CD8-positive, alpha-beta T cell (primary cell): ENCODE measurements at regions of chr17 and their contacts with region 1.

Region 1: DNA sequence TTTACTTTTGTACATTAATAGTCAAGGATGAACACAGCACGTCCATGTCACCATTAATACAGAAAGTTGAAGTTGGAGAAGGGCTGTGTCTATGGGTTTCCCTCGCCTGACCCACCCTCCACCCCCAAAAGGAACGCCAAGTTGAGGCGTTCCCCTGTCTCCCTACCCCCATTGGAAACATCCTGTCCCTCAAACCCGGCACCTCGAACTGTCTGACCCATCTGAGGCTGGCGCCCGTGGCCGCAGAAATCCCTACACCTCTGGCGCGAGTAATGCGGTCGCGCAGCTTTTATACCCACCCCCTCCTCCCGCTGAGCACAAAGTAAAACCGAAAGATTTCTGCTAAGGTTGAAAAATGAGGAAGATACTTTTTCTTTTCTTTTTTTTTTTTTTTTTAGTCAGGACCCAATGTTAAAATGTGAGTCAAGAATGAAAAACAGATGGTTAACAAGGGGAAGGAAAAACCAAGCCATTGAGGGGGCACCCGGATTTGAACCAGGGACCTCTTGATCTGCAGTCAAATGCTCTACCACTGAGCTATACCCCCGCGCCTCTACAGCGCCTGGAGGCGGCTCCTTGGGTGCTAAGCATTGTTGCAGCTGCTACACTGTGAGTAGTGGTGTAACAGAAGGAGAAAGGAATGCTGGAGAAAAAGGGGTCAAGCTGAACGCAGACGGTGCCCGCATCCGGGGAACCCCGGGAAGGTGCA is 887 bp upstream of the LASP1 start:
- DNase-seq: peak; percentile 77 to 92 (median 88)
- ATAC-seq: peak; percentile 51
- H3K4me3 ChIP-seq: peak overlapping the region; percentile 99 to 100
- H3K4me3 Mint-ChIP-seq: peak overlapping the region; percentile 99
- H3K27ac ChIP-seq: peak overlapping the region; percentile 79 to 84
- H3K27ac Mint-ChIP-seq: peak overlapping the region; percentile 97
- H3K4me1 ChIP-seq: peaks cover 40% of the 10 kb centered on the region
- H3K4me1 Mint-ChIP-seq: peaks cover 52% of the 10 kb centered on the region
- H3K27me3 ChIP-seq: no peaks in the 10 kb centered on the region
- H3K27me3 Mint-ChIP-seq: no peaks in the 10 kb centered on the region
- CTCF ChIP-seq: no peak

Region 2: GRCh38 chr17:38799378-38800236 is 69.4 kb before region 1 on chr17 and contains the start of gene PIP4K2B:
- CTCF ChIA-PET with region 1: interaction called, 3 read pairs
- POLR2A ChIA-PET with region 1: interaction called, 5 read pairs
- intact Hi-C with region 1: loop called in 1 of 2 experiments (anchors 1 kb)
- DNase-seq: peak; percentile 58 to 93 (median 82)
- ATAC-seq: peak; percentile 76
- H3K4me3 ChIP-seq: peak within 1 kb of the TSS; percentile 88 to 95
- H3K4me3 Mint-ChIP-seq: peak within 1 kb of the TSS; percentile 91
- H3K27ac ChIP-seq: peak within 1 kb of the TSS; percentile 54 to 86
- H3K27ac Mint-ChIP-seq: peak within 1 kb of the TSS; percentile 90
- H3K4me1 ChIP-seq: peaks cover 31% of the 10 kb centered on the region
- H3K4me1 Mint-ChIP-seq: peaks cover 40% of the 10 kb centered on the region
- H3K27me3 ChIP-seq: no peaks in the 10 kb centered on the region
- H3K27me3 Mint-ChIP-seq: no peaks in the 10 kb centered on the region
- CTCF ChIP-seq: no peak
- total RNA-seq, gene PIP4K2B: 9.9 to 13.0 TPM

Region 3: GRCh38 chr17:38879878-38880682 is 11.1 kb after region 1 on chr17:
- CTCF ChIA-PET with region 1: interaction called, 6 read pairs
- POLR2A ChIA-PET with region 1: interaction called, 15 read pairs
- intact Hi-C with region 1: no loop called
- DNase-seq: peak in 2 of 9 experiments; percentile 29 to 59
- ATAC-seq: peak; percentile 48
- H3K4me3 ChIP-seq: peak overlapping the region; percentile 1 to 46
- H3K4me3 Mint-ChIP-seq: peak overlapping the region; percentile 66
- H3K27ac ChIP-seq: peak overlapping the region; percentile 34 to 57
- H3K27ac Mint-ChIP-seq: peak overlapping the region; percentile 88
- H3K4me1 ChIP-seq: peaks cover 89% of the 10 kb centered on the region
- H3K4me1 Mint-ChIP-seq: peaks cover 89% of the 10 kb centered on the region
- H3K27me3 ChIP-seq: no peaks in the 10 kb centered on the region
- H3K27me3 Mint-ChIP-seq: no peaks in the 10 kb centered on the region
- CTCF ChIP-seq: no peak

Region 4: DNA sequence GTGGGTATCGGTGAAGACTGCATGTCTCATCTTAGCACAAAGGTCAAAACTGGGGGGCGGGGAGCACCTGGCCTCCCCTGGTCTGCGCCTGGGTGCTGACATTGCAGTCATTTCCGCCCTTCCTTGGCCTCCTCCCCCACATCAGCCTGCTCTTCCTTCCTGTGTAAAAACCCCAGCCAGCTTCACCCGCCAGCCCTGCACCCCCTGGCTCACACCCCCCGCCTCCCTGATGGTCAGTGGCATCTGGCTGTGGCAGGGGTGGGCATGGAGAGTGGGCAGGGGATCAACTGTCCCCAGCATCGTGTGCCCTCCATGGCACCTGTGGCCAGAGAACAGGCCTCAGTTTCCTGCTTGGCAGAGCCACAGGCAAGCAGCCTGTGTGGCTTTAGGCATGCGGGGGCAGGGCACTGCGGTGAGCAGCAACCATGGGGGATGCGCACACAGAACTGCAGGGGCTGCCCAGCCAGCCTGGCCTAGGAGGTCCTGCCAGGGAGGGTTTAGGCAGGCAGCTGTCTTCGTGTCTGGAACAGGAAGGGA is 29.9 kb after region 1 on chr17:
- CTCF ChIA-PET with region 1: interaction called, 7 read pairs
- POLR2A ChIA-PET with region 1: interaction called, 38 read pairs
- intact Hi-C with region 1: loop called (anchors 1 kb)
- DNase-seq: peak; percentile 59 to 94 (median 88)
- ATAC-seq: peak; percentile 81
- H3K4me3 ChIP-seq: peak overlapping the region; percentile 25 to 49
- H3K4me3 Mint-ChIP-seq: peak overlapping the region; percentile 77
- H3K27ac ChIP-seq: peak overlapping the region; percentile 56 to 94
- H3K27ac Mint-ChIP-seq: peak overlapping the region; percentile 95
- H3K4me1 ChIP-seq: peaks cover 78% of the 10 kb centered on the region
- H3K4me1 Mint-ChIP-seq: peaks cover 73% of the 10 kb centered on the region
- H3K27me3 ChIP-seq: no peaks in the 10 kb centered on the region
- H3K27me3 Mint-ChIP-seq: no peaks in the 10 kb centered on the region
- CTCF ChIP-seq: no peak

Region 5: GRCh38 chr17:38982858-38983746 is 114.1 kb after region 1 on chr17:
- CTCF ChIA-PET with region 1: interaction called, 4 read pairs
- POLR2A ChIA-PET with region 1: no interaction called
- intact Hi-C with region 1: loop called in 1 of 2 experiments (anchors 1 kb)
- DNase-seq: peak in 8 of 9 experiments; percentile 16 to 82 (median 55)
- ATAC-seq: peak; percentile 84
- H3K4me3 ChIP-seq: no peak overlapping the region
- H3K4me3 Mint-ChIP-seq: no peak overlapping the region
- H3K27ac ChIP-seq: no peak overlapping the region
- H3K27ac Mint-ChIP-seq: no peak overlapping the region
- H3K4me1 ChIP-seq: no peaks in the 10 kb centered on the region
- H3K4me1 Mint-ChIP-seq: peaks cover 2% of the 10 kb centered on the region
- H3K27me3 ChIP-seq: no peaks in the 10 kb centered on the region
- H3K27me3 Mint-ChIP-seq: no peaks in the 10 kb centered on the region
- CTCF ChIP-seq: peak; percentile 72